ENCODE measurements at regions of chr12 and their contacts with region 1.

Region 1: DNA sequence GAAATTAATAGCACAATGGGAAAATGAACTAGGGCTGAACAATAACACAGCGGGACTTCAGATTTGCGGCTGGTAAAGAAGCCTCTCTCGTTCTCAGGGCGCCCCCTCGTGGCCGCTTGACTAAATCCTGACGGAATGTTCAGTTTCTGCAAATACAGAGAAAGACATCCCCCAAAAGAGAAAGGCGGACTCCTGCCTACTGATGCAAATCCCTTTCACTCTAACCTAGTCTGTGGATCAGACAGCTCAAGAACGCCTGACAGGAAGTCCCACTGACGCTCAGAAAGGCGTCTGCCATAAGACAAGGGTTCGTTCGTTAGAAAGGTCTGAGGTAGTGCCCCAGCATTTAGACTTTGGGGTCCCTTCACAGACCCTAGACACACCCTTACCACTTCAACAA is 2.5 kb downstream of the NUAK1 start:
- DNase-seq: peak; percentile 69 to 85 (median 81)
- H3K4me3 ChIP-seq: no peak overlapping the region
- H3K27ac ChIP-seq: no peak overlapping the region
- H3K4me1 ChIP-seq: peaks cover 0 to 20% (median 12%) of the 10 kb centered on the region in 4 experiments
- H3K27me3 ChIP-seq: peaks cover 5 to 85% (median 33%) of the 10 kb centered on the region in 5 experiments

Region 2: GRCh38 chr12:105420659-105421240 is 715.5 kb before region 1 on chr12:
- CTCF ChIA-PET with region 1: interaction called, 46 read pairs
- POLR2A ChIA-PET with region 1: interaction called, 3 read pairs
- DNase-seq: peak; percentile 58 to 79 (median 71)
- H3K4me3 ChIP-seq: no peak overlapping the region
- H3K27ac ChIP-seq: no peak overlapping the region
- H3K4me1 ChIP-seq: no peaks in the 10 kb centered on the region
- H3K27me3 ChIP-seq: peaks cover 0 to 13% (median 3%) of the 10 kb centered on the region in 5 experiments

Measured in common myeloid progenitor, CD34-positive (primary cell).